HepG2 (cell line): ENCODE measurements at regions of chr16 and their contacts with region 1.

Region 1: DNA sequence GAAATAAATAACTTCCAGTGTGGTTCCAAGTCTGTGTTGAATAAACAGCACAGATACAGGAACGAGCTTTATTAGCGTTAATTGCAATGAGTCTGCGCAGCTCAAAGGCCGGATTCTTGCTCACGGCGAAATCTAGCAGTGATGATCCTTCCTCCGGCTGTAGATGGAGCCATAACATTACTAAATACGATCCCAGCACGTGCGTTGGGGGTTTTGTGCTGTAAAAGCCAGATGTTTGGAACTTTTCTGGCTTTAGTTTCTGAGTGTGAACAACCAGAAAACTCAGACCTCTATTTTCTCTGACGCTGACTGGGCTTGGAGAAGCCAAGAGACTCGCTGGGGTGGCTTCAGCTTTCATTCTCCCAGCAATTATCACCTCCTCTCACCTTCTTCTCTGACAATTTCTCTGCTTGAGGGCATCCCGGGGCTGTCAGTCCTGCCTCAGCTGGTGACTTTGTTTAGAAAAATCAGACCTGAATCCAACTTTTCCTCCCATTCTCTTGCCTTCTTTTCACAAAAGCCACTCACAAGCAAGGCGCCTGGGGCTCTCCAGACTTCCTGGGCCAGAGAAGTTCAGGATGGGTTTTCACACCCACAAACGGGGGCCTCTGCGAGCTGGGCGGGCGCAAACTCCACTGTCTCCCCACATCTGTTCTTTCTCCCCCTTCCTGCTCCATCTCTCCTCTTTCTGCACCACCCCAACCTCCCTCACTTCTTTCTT is 47.1 kb upstream of the AKTIP start:
- DNase-seq: peak; percentile 69
- ATAC-seq: peak; percentile 83
- H3K4me3 ChIP-seq: no peak overlapping the region
- H3K27ac ChIP-seq: no peak overlapping the region
- H3K4me1 ChIP-seq: peaks cover 26% of the 10 kb centered on the region
- H3K27me3 ChIP-seq: peaks cover 0 to 25% of the 10 kb centered on the region in 2 experiments
- CTCF ChIP-seq: peak; percentile 95
- EP300 ChIP-seq: no peak
- POLR2A ChIP-seq: no peak
- RAD21 ChIP-seq: peak; percentile 87

Region 2: GRCh38 chr16:53509906-53510703 is 40.0 kb before region 1 on chr16:
- CTCF ChIA-PET with region 1: interaction called, 22 read pairs
- POLR2A ChIA-PET with region 1: interaction called, 10 read pairs
- in situ Hi-C with region 1: no loop called
- intact Hi-C with region 1: loop called (anchors 1 kb)
- DNase-seq: peak; percentile 67
- ATAC-seq: peak; percentile 70
- H3K4me3 ChIP-seq: peak overlapping the region; percentile 42 to 70 (median 50)
- H3K27ac ChIP-seq: peak overlapping the region; percentile 36
- H3K4me1 ChIP-seq: peaks cover 50% of the 10 kb centered on the region
- H3K27me3 ChIP-seq: no peaks in the 10 kb centered on the region
- CTCF ChIP-seq: peak; percentile 88
- EP300 ChIP-seq: peak in 1 of 2 experiments; percentile 31; a peak in 1 of 4 replicates
- POLR2A ChIP-seq: peak in 1 of 2 experiments; percentile 30; a peak in 1 of 4 replicates
- RAD21 ChIP-seq: peak; percentile 70

Region 3: GRCh38 chr16:53881371-53881770 is 331.2 kb after region 1 on chr16:
- CTCF ChIA-PET with region 1: no interaction called
- POLR2A ChIA-PET with region 1: no interaction called
- in situ Hi-C with region 1: no loop called
- intact Hi-C with region 1: loop called (anchors 10 kb)
- DNase-seq: peak; percentile 87
- ATAC-seq: peak; percentile 97
- H3K4me3 ChIP-seq: no peak overlapping the region; a peak in 1 of 6 replicates
- H3K27ac ChIP-seq: peak overlapping the region; percentile 90
- H3K4me1 ChIP-seq: peaks cover 38% of the 10 kb centered on the region
- H3K27me3 ChIP-seq: no peaks in the 10 kb centered on the region
- CTCF ChIP-seq: no peak
- EP300 ChIP-seq: peak; percentile 69 to 92; a peak in 3 of 4 replicates
- POLR2A ChIP-seq: peak; percentile 33 to 36; a peak in 2 of 4 replicates
- RAD21 ChIP-seq: peak; percentile 42

Region 4: GRCh38 chr16:55257966-55258613 is 1708.0 kb after region 1 on chr16:
- CTCF ChIA-PET with region 1: interaction called, 5 read pairs
- POLR2A ChIA-PET with region 1: no interaction called
- in situ Hi-C with region 1: loop called (anchors 10 kb)
- intact Hi-C with region 1: loop called (anchors 1 kb)
- DNase-seq: peak; percentile 41
- ATAC-seq: peak; percentile 97
- H3K4me3 ChIP-seq: no peak overlapping the region
- H3K27ac ChIP-seq: no peak overlapping the region
- H3K4me1 ChIP-seq: no peaks in the 10 kb centered on the region
- H3K27me3 ChIP-seq: no peaks in the 10 kb centered on the region; a peak in 2 of 5 replicates
- CTCF ChIP-seq: peak; percentile 78
- EP300 ChIP-seq: no peak
- POLR2A ChIP-seq: no peak
- RAD21 ChIP-seq: peak; percentile 84